Heart right ventricle (tissue), 16 donors: ENCODE measurements at regions of chr15 and their contacts with region 1.

Region 1: GRCh38 chr15:29668120-29668602 is 154.1 kb downstream of the TJP1 start:
- DNase-seq: peak; percentile 48 to 74
- ATAC-seq: peak; percentile 73 to 95 (median 92)
- H3K4me3 ChIP-seq: no peak overlapping the region
- H3K27ac ChIP-seq: no peak overlapping the region
- H3K4me1 ChIP-seq: peaks cover 0 to 7% (median 0%) of the 10 kb centered on the region in 9 donors
- H3K27me3 ChIP-seq: peaks cover 0 to 18% (median 0%) of the 10 kb centered on the region in 7 donors
- CTCF ChIP-seq: peak; percentile 68 to 90 (median 78)

Region 2: DNA sequence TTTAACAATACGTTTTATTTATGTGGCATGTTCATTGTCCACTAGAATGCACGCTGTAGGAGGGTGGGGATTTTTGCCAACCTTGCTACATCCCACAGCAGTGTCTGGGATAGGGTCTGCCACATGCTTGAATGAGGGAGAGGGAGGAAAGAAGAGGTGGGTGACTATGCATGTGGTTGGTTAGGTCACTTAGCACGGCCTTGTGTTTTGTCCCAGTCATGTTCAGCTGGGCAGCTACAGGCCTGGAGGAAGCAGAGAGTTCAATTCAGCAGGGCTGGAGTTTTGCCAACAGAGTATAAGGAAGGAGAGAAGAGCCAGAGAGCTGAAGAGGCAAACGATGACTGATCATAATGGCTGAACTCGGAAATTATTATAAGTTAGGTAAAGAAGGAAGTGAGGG is 130.1 kb before region 1 on chr15:
- intact Hi-C with region 1: no loop called
- DNase-seq: no peak
- ATAC-seq: no peak
- H3K4me3 ChIP-seq: no peak overlapping the region
- H3K27ac ChIP-seq: no peak overlapping the region
- H3K4me1 ChIP-seq: no peaks in the 10 kb centered on the region
- H3K27me3 ChIP-seq: peaks cover 0 to 1% (median 0%) of the 10 kb centered on the region in 7 donors
- CTCF ChIP-seq: no peak

Region 3: DNA sequence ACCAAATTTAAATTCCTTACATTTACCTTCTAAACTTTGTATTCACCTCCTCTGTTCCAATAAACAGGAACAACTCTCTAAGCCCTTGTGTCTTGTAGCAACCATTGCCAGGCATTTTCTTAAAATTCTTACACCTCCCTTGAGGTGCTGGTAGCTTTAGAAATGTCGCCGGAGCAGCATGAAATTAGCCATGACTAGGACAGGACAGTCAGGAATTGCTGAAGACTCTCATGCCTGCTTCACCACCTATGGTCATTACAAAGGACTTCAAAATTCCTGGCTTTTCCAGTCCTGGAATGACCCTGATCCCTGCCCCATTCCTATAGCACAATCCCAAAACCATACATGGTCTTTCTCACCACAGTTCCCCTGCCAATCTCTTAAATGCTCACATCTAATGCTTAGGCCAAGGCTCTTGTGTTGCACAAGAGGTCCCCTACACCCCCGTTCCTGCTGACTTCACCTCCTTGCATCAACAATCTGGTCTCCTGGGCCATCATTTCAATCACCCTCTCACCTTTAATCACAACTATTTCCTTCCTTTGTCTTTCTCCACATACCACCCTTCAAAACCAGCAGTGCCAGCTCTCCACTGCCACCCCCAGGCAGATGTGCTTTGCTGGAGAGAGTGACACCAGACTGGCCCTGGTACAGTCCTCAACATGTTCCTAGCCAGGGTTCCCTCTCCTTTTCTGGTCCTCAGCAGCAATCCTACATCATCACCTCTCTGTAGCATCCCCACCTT is 267.3 kb after region 1 on chr15:
- intact Hi-C with region 1: loop called in 1 of 10 experiments (anchors 5 kb)
- DNase-seq: no peak
- ATAC-seq: peak in 6 of 8 donors; percentile 53 to 80 (median 61)
- H3K4me3 ChIP-seq: no peak overlapping the region
- H3K27ac ChIP-seq: no peak overlapping the region
- H3K4me1 ChIP-seq: peaks cover 0 to 3% (median 0%) of the 10 kb centered on the region in 9 donors
- H3K27me3 ChIP-seq: no peaks in the 10 kb centered on the region
- CTCF ChIP-seq: peak in 6 of 9 donors; percentile 19 to 56 (median 40)

Region 4: GRCh38 chr15:29967956-29968889 is 300.1 kb after region 1 on chr15:
- intact Hi-C with region 1: no loop called
- DNase-seq: no peak
- ATAC-seq: peak in 1 of 8 donors; percentile 67
- H3K4me3 ChIP-seq: peak overlapping the region in 9 of 10 donors; percentile 29 to 49 (median 41)
- H3K27ac ChIP-seq: no peak overlapping the region
- H3K4me1 ChIP-seq: peaks cover 0 to 4% (median 0%) of the 10 kb centered on the region in 9 donors
- H3K27me3 ChIP-seq: peaks cover 0 to 70% (median 31%) of the 10 kb centered on the region in 7 donors
- CTCF ChIP-seq: no peak